Esophagus muscularis mucosa (tissue), 4 donors: ENCODE measurements at regions of chr10 and their contacts with region 1.

Region 1: DNA sequence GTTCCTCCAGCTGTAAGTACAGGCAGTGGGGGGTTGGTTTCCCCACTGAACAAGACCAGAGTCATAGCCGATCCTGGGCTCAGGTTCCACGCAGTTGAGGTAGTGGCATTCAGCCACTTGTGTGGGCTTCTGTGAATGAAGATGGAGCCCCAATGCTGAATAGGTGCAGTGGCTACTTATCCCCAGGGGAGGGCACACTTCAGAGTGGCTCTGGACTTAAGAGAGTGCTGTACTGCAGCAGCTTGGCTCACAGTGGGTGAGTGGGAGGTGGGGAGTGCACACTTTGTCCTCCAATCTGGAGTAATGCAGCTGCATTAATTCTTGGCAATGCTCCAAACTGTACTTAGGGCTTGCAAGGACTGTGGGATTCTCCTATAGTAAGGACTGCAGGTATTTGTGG is 81.9 kb downstream of the BUB3 start:
- DNase-seq: no peak
- H3K4me3 ChIP-seq: no peak overlapping the region
- H3K27ac ChIP-seq: no peak overlapping the region
- H3K4me1 ChIP-seq: no peaks in the 10 kb centered on the region
- H3K27me3 ChIP-seq: no peaks in the 10 kb centered on the region
- CTCF ChIP-seq: no peak
- EP300 ChIP-seq: no peak
- POLR2A ChIP-seq: no peak

Region 2: GRCh38 chr10:123392182-123392963 is 156.3 kb after region 1 on chr10:
- intact Hi-C with region 1: loop called (anchors 5 kb)
- DNase-seq: no peak
- H3K4me3 ChIP-seq: no peak overlapping the region
- H3K27ac ChIP-seq: no peak overlapping the region
- H3K4me1 ChIP-seq: no peaks in the 10 kb centered on the region
- H3K27me3 ChIP-seq: no peaks in the 10 kb centered on the region
- CTCF ChIP-seq: no peak
- EP300 ChIP-seq: no peak
- POLR2A ChIP-seq: no peak